Activated CD8-positive, alpha-beta memory T cell treated with anti-CD3 and anti-CD28 coated beads, Interleukin-2, amount 10 ng/mL, durations not matched to agents 7 days and 5 days (primary cell): ENCODE measurements at regions of chr1 and their contacts with region 1.

Region 1: DNA sequence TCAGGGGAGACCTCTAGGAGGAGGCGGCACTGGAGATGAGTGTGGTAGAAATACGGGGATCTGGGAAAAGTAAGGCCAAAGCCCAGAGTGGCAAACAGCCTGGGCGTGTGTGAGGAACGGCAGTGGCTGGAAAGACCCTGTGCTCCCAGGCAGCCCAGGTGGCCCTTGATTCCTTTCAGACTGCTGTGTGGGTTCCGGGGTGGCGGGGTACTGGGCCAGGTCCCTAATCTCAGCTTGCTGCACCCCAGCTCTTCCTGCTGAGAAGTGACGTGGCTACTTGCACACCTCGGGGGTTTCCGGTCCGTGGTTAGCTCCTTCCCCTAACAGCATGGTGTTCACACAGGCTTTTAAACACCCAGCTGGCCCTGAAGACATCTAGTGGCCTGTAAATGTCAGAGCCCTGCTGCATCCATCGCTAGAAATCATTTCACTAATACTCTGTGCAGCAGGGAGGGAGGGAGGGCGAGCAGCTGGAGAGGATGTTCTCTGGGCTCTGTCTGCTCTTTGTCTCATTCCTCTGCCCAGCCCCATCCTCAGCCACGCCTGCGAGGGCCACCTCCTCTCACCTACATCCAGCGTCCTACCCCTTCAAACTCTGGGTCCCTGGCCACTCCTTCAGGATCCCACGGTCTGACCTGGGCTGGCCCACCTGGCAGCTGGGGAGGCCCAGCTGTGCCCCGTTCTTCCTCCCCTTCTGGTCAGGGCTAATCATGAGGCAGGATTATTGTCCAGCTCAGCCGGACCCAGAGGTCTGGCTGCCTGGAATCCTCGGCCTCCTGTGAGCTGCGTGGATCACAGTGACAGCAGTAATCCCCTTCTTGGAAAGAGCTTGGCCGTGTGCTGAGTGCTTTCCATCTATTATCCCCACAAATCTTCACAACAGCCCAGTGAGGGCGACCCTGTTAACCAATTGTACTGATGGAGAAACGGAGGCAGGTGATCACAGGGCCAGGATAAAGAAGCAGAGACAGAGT is 7.2 kb downstream of the ZDHHC18 start:
- DNase-seq: peak; percentile 98
- ATAC-seq: peak; percentile 97
- H3K4me3 Mint-ChIP-seq: peak overlapping the region; percentile 56
- H3K27ac Mint-ChIP-seq: peak overlapping the region; percentile 96
- H3K4me1 Mint-ChIP-seq: peaks cover 75% of the 10 kb centered on the region
- H3K27me3 Mint-ChIP-seq: no peaks in the 10 kb centered on the region

Region 2: DNA sequence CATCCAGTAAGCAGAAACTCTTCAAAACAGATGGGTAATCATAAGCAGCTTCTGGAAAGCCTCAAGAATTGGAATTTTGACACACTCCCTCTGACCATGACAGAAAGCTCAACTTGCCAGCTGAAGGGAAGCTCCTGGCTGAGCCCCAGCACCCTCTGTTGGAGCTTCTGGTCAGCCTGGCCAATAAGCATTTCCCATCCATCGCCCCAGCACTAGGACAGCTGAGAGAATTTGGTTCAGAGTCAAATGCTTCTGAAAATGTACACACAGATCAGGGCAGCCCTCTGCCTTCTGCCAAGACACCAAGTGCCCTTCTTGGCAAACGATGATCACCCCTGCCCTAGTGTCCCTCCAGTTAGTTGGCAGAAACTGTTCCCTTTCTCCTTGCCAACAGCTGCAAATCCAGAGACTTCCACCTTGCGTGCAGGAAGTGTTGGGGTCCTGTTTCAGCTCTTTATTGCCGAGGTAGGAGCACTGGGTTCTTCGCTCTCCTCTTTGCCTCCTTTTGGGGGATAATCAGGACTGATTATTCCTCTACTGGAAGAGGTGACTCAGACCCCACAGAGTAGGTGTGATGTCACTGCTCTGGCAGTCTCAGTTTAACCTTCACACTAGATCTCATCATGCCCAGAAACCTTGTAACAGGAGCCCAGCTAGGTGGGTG is 34.1 kb before region 1 on chr1:
- CTCF ChIA-PET with region 1: interaction called, 59 read pairs
- DNase-seq: peak; percentile 63
- ATAC-seq: peak; percentile 76
- H3K4me3 Mint-ChIP-seq: peak overlapping the region; percentile 56
- H3K27ac Mint-ChIP-seq: peak overlapping the region; percentile 97
- H3K4me1 Mint-ChIP-seq: peaks cover 47% of the 10 kb centered on the region
- H3K27me3 Mint-ChIP-seq: no peaks in the 10 kb centered on the region

Region 3: GRCh38 chr1:26820784-26821269 is 12.9 kb before region 1 on chr1:
- CTCF ChIA-PET with region 1: interaction called, 44 read pairs
- DNase-seq: peak; percentile 64
- ATAC-seq: peak; percentile 94
- H3K4me3 Mint-ChIP-seq: peak overlapping the region; percentile 70
- H3K27ac Mint-ChIP-seq: peak overlapping the region; percentile 82
- H3K4me1 Mint-ChIP-seq: peaks cover 23% of the 10 kb centered on the region
- H3K27me3 Mint-ChIP-seq: no peaks in the 10 kb centered on the region

Region 4: DNA sequence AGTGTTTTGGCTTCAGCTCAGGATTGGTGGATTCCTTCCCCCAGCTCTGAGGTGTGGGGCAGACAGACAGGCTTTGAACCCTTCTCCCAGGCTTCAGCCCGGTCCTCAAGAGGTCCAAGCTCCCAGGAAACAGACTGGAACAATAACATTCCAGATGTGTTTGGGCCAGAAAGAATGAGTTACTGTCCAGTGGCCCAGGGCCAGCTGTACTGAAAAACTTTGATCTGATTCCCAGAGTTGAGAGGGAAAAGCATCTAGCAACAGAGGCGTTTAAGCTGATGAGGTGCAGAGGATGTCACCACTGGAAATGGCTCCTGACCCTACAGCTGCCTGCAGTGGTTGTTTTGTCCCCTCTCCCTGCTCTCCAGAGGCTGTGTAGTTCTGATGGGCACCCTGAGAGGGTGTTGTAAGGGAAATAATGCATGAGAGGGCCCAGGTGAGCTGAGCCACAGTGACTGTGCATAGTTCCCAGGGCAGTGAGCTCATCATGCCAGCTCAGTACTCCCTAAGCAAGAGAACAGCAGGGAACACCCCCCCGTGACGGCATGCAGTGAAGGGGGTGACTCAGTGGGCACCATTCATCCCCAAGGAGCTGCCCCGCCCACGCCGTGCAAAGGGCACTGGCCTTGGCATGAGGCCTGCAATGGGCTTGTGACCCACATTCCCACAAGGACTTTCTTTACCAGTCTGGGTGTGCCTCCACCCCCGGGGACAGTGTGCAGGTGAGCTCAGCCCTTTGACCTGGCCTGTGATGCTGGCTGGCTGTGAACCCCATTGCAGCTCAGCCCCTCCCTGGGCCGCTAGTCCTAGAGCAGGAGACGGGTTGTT is 15.4 kb after region 1 on chr1:
- CTCF ChIA-PET with region 1: interaction called, 14 read pairs
- DNase-seq: no peak
- ATAC-seq: no peak
- H3K4me3 Mint-ChIP-seq: no peak overlapping the region
- H3K27ac Mint-ChIP-seq: no peak overlapping the region
- H3K4me1 Mint-ChIP-seq: peaks cover 2% of the 10 kb centered on the region
- H3K27me3 Mint-ChIP-seq: no peaks in the 10 kb centered on the region

Region 5: GRCh38 chr1:26864610-26865527 is 31.1 kb after region 1 on chr1:
- CTCF ChIA-PET with region 1: interaction called, 23 read pairs
- DNase-seq: peak; percentile 97
- ATAC-seq: peak; percentile 95
- H3K4me3 Mint-ChIP-seq: peak overlapping the region; percentile 84
- H3K27ac Mint-ChIP-seq: peak overlapping the region; percentile 87
- H3K4me1 Mint-ChIP-seq: peaks cover 29% of the 10 kb centered on the region
- H3K27me3 Mint-ChIP-seq: no peaks in the 10 kb centered on the region

Region 6: DNA sequence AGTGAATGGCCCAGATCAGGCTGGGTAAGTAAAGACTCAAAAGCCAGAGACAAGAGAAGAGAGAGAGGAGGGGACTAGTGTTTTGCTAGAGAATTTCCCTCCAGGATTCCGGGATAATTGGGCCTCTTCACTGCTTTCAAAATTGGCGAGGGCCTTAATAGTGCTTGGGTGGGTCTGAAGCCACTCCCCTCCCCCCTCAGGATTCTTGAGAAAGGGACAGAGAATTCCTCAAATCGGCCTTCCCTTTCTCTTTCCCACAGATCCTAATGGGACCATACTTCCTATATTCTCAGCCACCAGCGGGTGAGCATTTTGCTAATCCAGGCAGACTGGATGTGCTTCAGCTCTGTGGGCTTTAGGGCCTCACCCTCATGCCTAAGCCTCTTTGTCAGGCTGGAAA is 41.2 kb after region 1 on chr1:
- CTCF ChIA-PET with region 1: interaction called, 10 read pairs
- DNase-seq: no peak
- ATAC-seq: no peak
- H3K4me3 Mint-ChIP-seq: no peak overlapping the region
- H3K27ac Mint-ChIP-seq: peak overlapping the region; percentile 24
- H3K4me1 Mint-ChIP-seq: peaks cover 6% of the 10 kb centered on the region
- H3K27me3 Mint-ChIP-seq: no peaks in the 10 kb centered on the region